ENCODE measurements at regions of chr6 and their contacts with region 1.

Region 1: GRCh38 chr6:135451693-135452092 is 45.8 kb downstream of the AHI1 start:
- DNase-seq: no peak
- H3K4me3 Mint-ChIP-seq: no peak overlapping the region
- H3K27ac Mint-ChIP-seq: no peak overlapping the region
- H3K4me1 Mint-ChIP-seq: no peaks in the 10 kb centered on the region
- H3K27me3 Mint-ChIP-seq: no peaks in the 10 kb centered on the region

Region 2: DNA sequence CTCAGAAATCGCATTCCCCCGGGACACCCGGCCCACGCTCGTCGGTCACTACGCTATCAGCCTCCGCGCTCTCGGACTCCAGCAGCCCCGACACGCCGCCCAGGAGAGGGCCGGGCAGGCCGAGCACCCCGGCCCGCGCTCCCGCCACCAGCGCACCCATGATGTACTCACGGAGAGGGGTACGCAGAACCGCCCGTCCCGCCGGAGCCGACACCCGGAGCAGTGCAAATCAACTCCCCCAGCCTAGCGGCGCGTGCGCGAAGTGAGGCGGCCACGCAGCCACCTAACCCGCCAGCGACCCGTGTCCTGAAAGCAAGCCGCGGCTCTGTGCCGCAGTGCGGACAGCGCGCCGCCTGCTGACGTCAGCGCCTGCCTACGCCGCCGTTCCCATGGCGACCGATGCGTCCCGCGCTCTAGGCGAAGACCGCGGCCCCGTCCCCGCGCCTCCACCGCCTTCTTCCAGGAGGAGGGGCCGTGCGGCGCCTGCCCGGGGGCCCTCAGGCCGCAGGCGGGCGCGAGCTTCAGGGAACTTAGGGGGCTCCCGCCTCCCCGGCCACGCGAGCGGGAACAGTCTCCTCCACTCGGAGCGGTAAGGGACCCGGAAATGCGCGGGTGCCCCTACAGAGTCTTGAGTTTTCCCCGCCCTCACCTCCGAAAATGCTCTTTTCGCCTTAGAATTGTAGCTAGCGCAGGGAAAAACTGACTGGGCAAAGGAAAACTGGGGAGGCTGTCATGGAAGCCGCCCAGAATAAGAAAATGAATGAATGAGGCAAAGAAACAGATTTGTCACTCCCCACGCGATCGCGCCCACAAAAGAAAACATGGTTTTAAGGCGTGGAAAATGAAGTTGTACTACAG is 45.9 kb after region 1 on chr6 and contains the start of gene AHI1:
- CTCF ChIA-PET with region 1: interaction called, 11 read pairs
- POLR2A ChIA-PET with region 1: no interaction called
- intact Hi-C with region 1: loop called (anchors 5 kb)
- DNase-seq: peak; percentile 90
- H3K4me3 Mint-ChIP-seq: peak within 1 kb of the TSS; percentile 9
- H3K27ac Mint-ChIP-seq: no peak within 1 kb of the TSS
- H3K4me1 Mint-ChIP-seq: peaks cover 10% of the 10 kb centered on the region
- H3K27me3 Mint-ChIP-seq: no peaks in the 10 kb centered on the region
- total RNA-seq, gene AHI1: 18.6 to 22.7 TPM

Measured in activated CD4-positive, alpha-beta memory T cell treated with anti-CD3 and anti-CD28 coated beads for 36 hours (primary cell).